HepG2 (cell line): ENCODE measurements at regions of chr3 and their contacts with region 1.

Region 1: DNA sequence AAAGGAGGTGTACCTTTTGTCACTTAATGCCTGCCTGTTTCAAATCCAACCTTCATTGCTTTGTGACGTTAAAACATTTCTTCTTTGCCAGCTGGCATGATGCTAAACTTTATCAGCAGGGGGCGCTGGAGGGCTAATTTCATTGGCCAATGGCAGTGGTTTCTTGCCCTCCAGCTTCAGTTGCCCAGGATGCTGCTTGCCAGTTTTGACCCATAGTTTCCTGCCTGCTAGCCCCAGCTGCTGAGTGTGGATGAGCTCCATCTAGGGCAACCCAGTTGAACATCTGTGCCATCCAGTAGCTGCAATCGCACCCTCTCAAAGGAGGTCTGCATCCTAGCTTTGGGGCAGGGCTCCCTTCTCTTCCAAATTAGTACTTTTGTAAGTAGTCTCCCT is 22.1 kb downstream of the ACKR2 start:
- DNase-seq: peak; percentile 73
- ATAC-seq: 0 out of 3 replicates have a peak, but pooled peaks have one; percentile 5
- H3K4me3 ChIP-seq: no peak overlapping the region
- H3K27ac ChIP-seq: no peak overlapping the region
- H3K4me1 ChIP-seq: peaks cover 50% of the 10 kb centered on the region
- H3K27me3 ChIP-seq: no peaks in the 10 kb centered on the region
- CTCF ChIP-seq: peak; percentile 91
- EP300 ChIP-seq: no peak
- POLR2A ChIP-seq: no peak
- RAD21 ChIP-seq: peak; percentile 87

Region 2: GRCh38 chr3:41247055-41248004 is 1584.0 kb before region 1 on chr3:
- CTCF ChIA-PET with region 1: no interaction called
- POLR2A ChIA-PET with region 1: no interaction called
- in situ Hi-C with region 1: no loop called
- intact Hi-C with region 1: no loop called
- DNase-seq: peak; percentile 95
- ATAC-seq: peak; percentile 68
- H3K4me3 ChIP-seq: no peak overlapping the region; a peak in 1 of 6 replicates
- H3K27ac ChIP-seq: peak overlapping the region; percentile 48
- H3K4me1 ChIP-seq: peaks cover 53% of the 10 kb centered on the region
- H3K27me3 ChIP-seq: no peaks in the 10 kb centered on the region
- CTCF ChIP-seq: no peak
- EP300 ChIP-seq: peak in 1 of 2 experiments; percentile 90; a peak in 3 of 4 replicates
- POLR2A ChIP-seq: no peak
- RAD21 ChIP-seq: no peak

Region 3: GRCh38 chr3:42247576-42248027 is 583.7 kb before region 1 on chr3:
- CTCF ChIA-PET with region 1: no interaction called
- POLR2A ChIA-PET with region 1: no interaction called
- in situ Hi-C with region 1: loop called (anchors 25 kb)
- intact Hi-C with region 1: loop called (anchors 5 kb)
- DNase-seq: peak; percentile 59
- ATAC-seq: peak; percentile 85
- H3K4me3 ChIP-seq: 0 out of 6 replicates have a peak overlapping the region, but pooled peaks of 1 of the 3 experiments have one; percentile 12
- H3K27ac ChIP-seq: no peak overlapping the region
- H3K4me1 ChIP-seq: no peaks in the 10 kb centered on the region
- H3K27me3 ChIP-seq: peaks cover 0 to 22% of the 10 kb centered on the region in 2 experiments; a peak in 3 of 5 replicates
- CTCF ChIP-seq: peak; percentile 82
- EP300 ChIP-seq: no peak
- POLR2A ChIP-seq: no peak
- RAD21 ChIP-seq: peak; percentile 81

Region 4: DNA sequence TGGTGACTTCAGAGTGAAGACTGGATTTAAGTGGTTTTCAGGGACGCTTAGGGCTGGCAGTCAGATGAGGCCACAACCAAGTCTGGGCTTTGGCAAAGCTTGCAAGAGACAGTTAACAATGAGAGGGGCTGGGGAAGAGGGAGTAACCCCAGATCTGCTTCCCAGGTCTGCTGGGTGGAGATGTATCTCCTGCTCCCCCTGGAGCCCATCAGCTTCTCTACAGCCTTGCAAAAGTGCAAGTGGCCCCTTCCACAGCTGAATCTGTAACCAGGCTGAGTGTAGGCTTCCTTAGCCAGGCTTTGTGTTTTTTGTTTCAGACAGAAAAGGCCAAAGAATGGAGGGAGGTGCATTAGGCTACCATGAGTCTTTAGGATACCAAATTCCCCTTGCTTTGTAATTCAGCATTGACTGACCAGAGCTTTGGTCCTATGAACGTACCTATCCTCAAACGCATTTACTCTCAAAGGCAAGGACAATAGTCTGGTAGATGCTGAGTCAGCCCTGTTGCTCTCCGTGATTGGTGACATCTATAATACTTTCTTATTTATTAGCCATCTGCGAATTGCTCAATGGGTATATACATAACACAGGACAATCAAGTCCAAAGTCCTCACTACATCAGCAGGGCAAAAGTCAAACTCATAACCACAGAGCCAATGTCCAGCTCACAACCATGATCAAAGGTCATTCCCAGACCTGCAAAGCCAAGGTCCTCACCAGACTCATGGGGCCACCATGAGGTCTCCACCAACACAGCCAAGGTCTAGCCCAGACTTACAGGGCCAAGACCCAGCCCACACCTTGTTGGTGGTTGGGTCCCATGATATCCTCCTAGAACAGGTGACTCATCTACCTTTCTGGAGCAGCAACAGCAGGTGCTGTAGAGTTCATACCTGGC is 75.4 kb before region 1 on chr3:
- CTCF ChIA-PET with region 1: no interaction called
- POLR2A ChIA-PET with region 1: interaction called, 17 read pairs
- in situ Hi-C with region 1: no loop called
- intact Hi-C with region 1: no loop called
- DNase-seq: peak; percentile 91
- ATAC-seq: peak; percentile 88
- H3K4me3 ChIP-seq: peak overlapping the region in 1 of 3 experiments; percentile 18; a peak in 1 of 6 replicates
- H3K27ac ChIP-seq: peak overlapping the region; percentile 87
- H3K4me1 ChIP-seq: peaks cover 29% of the 10 kb centered on the region
- H3K27me3 ChIP-seq: no peaks in the 10 kb centered on the region
- CTCF ChIP-seq: peak; percentile 77
- EP300 ChIP-seq: peak; percentile 80 to 92; a peak in 3 of 4 replicates
- POLR2A ChIP-seq: no peak
- RAD21 ChIP-seq: no peak; the same call in 1 of the 2 replicates

Region 5: GRCh38 chr3:42804106-42804830 is 27.0 kb before region 1 on chr3 and contains the start of gene HIGD1A:
- CTCF ChIA-PET with region 1: no interaction called
- POLR2A ChIA-PET with region 1: interaction called, 105 read pairs
- in situ Hi-C with region 1: no loop called
- intact Hi-C with region 1: loop called (anchors 1 kb)
- DNase-seq: peak; percentile 91
- ATAC-seq: peak; percentile 98
- H3K4me3 ChIP-seq: peak within 1 kb of the TSS; percentile 87 to 98 (median 92)
- H3K27ac ChIP-seq: peak within 1 kb of the TSS; percentile 93
- H3K4me1 ChIP-seq: peaks cover 66% of the 10 kb centered on the region
- H3K27me3 ChIP-seq: no peaks in the 10 kb centered on the region; a peak in 1 of 5 replicates
- CTCF ChIP-seq: no peak
- EP300 ChIP-seq: 0 out of 4 replicates have a peak, but pooled peaks of 1 of the 2 experiments have one; percentile 1
- POLR2A ChIP-seq: peak; percentile 82 to 95
- RAD21 ChIP-seq: peak; percentile 24; the same call in 1 of the 2 replicates
- total RNA-seq, gene HIGD1A: 253 and 379 TPM in 2 replicates

Region 6: GRCh38 chr3:42852441-42852840 is 21.1 kb after region 1 on chr3:
- CTCF ChIA-PET with region 1: no interaction called
- POLR2A ChIA-PET with region 1: interaction called, 12 read pairs
- in situ Hi-C with region 1: no loop called
- intact Hi-C with region 1: no loop called
- DNase-seq: no peak
- ATAC-seq: no peak
- H3K4me3 ChIP-seq: no peak overlapping the region
- H3K27ac ChIP-seq: peak overlapping the region; percentile 98
- H3K4me1 ChIP-seq: peaks cover 95% of the 10 kb centered on the region
- H3K27me3 ChIP-seq: no peaks in the 10 kb centered on the region
- CTCF ChIP-seq: no peak
- EP300 ChIP-seq: no peak
- POLR2A ChIP-seq: no peak
- RAD21 ChIP-seq: no peak

Region 7: GRCh38 chr3:42914771-42915515 is 83.6 kb after region 1 on chr3:
- CTCF ChIA-PET with region 1: no interaction called
- POLR2A ChIA-PET with region 1: no interaction called
- in situ Hi-C with region 1: no loop called
- intact Hi-C with region 1: no loop called
- DNase-seq: peak; percentile 92
- ATAC-seq: peak; percentile 88
- H3K4me3 ChIP-seq: no peak overlapping the region
- H3K27ac ChIP-seq: no peak overlapping the region
- H3K4me1 ChIP-seq: peaks cover 22% of the 10 kb centered on the region
- H3K27me3 ChIP-seq: no peaks in the 10 kb centered on the region; a peak in 1 of 5 replicates
- CTCF ChIP-seq: no peak
- EP300 ChIP-seq: 0 out of 4 replicates have a peak, but pooled peaks of 1 of the 2 experiments have one; percentile 32
- POLR2A ChIP-seq: no peak
- RAD21 ChIP-seq: no peak